Heart right ventricle (tissue), 16 donors: ENCODE measurements at regions of chr11 and their contacts with region 1.

Region 1: GRCh38 chr11:12008790-12009616 is 577 bp upstream of the DKK3 start:
- DNase-seq: peak; percentile 50 to 68
- ATAC-seq: peak; percentile 73 to 87 (median 75)
- H3K4me3 ChIP-seq: peak overlapping the region; percentile 58 to 84 (median 68)
- H3K27ac ChIP-seq: peak overlapping the region; percentile 22 to 92 (median 83)
- H3K4me1 ChIP-seq: peaks cover 6 to 49% (median 41%) of the 10 kb centered on the region in 9 donors
- H3K27me3 ChIP-seq: peaks cover 0 to 69% (median 7%) of the 10 kb centered on the region in 7 donors
- CTCF ChIP-seq: no peak

Region 2: DNA sequence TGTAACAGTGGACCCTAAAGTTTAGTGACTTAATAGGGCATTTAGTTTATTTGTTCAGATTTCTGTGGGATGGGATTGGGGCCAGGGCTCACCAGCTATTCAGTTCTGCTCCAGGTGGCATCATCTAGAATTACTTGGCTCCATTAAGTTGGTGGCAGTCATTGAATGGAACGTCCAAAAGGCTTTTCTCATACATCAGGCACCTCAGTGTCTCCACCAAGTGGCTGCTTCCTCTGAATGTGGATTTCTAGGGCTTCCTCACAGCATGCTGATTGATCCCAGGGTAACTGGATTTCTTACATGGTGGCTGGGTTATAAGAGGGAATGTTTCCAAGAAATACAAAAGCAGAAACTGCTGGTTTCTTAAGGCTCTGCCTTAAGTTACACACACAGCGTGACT is 132.5 kb before region 1 on chr11:
- intact Hi-C with region 1: no loop called
- DNase-seq: no peak
- ATAC-seq: no peak
- H3K4me3 ChIP-seq: no peak overlapping the region
- H3K27ac ChIP-seq: no peak overlapping the region
- H3K4me1 ChIP-seq: peaks cover 0 to 55% (median 39%) of the 10 kb centered on the region in 9 donors
- H3K27me3 ChIP-seq: no peaks in the 10 kb centered on the region
- CTCF ChIP-seq: peak in 2 of 9 donors; percentile 16 to 24

Region 3: GRCh38 chr11:11966826-11967668 is 42.0 kb before region 1 on chr11:
- intact Hi-C with region 1: loop called in 1 of 10 experiments (anchors 5 kb)
- DNase-seq: peak; percentile 74 to 80
- ATAC-seq: peak in 7 of 8 donors; percentile 35 to 70 (median 64)
- H3K4me3 ChIP-seq: no peak overlapping the region
- H3K27ac ChIP-seq: peak overlapping the region in 2 of 10 donors; percentile 19 to 32
- H3K4me1 ChIP-seq: peaks cover 4 to 85% (median 55%) of the 10 kb centered on the region in 9 donors
- H3K27me3 ChIP-seq: no peaks in the 10 kb centered on the region
- CTCF ChIP-seq: peak; percentile 73 to 84 (median 80)

Region 4: GRCh38 chr11:12552692-12553091 is 543.7 kb after region 1 on chr11:
- intact Hi-C with region 1: no loop called
- DNase-seq: peak in 1 of 2 donors; percentile 17
- ATAC-seq: peak; percentile 31 to 82 (median 66)
- H3K4me3 ChIP-seq: no peak overlapping the region
- H3K27ac ChIP-seq: no peak overlapping the region
- H3K4me1 ChIP-seq: peaks cover 9 to 41% (median 25%) of the 10 kb centered on the region in 9 donors
- H3K27me3 ChIP-seq: no peaks in the 10 kb centered on the region
- CTCF ChIP-seq: no peak

Region 5: GRCh38 chr11:12769834-12770345 is 760.9 kb after region 1 on chr11:
- intact Hi-C with region 1: no loop called
- DNase-seq: no peak
- ATAC-seq: peak in 1 of 8 donors; percentile 58
- H3K4me3 ChIP-seq: no peak overlapping the region
- H3K27ac ChIP-seq: peak overlapping the region in 1 of 10 donors; percentile 18
- H3K4me1 ChIP-seq: peaks cover 12 to 80% (median 66%) of the 10 kb centered on the region in 9 donors
- H3K27me3 ChIP-seq: no peaks in the 10 kb centered on the region
- CTCF ChIP-seq: no peak